Heart left ventricle (tissue), 16 donors: ENCODE measurements at regions of chr18 and their contacts with region 1.

Region 1: DNA sequence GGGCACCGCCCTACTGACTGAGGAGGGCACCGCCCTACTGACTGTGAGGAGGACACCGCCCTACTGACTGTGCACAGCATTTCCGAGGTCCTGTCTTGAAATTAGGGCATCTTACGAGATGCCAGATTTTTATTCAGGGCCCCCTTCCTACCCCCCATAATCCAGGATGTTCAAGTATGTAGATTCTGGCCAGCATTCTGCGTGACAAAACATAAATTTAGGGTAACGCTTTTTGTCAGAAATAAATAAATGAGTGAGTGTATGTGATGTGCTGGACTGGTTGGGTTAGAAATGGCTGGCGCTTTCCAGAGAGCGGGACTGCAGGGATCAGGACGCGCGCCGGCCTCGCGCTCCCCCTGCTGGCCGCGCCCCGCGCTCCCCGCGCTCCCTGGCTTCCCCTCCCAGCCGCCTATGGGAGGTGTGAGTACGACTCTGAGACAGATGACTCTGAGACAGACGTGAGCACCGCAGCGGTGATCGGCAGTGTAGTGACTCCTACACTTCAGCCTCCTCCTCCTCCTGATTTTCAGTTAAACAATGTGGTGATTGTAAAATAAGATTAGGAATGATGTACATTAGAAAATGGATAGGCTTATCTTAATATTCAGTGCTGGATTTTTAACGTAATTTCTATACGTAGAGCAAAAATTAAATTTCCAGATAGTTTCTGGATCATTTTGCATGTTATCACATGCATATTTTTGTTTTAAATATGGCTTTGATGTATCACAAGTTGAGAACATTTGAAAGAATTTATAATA is 149.2 kb upstream of the NFATC1 start:
- DNase-seq: peak; percentile 58 to 83 (median 71)
- ATAC-seq: peak; percentile 81 to 100 (median 97)
- H3K4me3 ChIP-seq: peak overlapping the region in 1 of 12 donors; percentile 11
- H3K27ac ChIP-seq: no peak overlapping the region
- H3K4me1 ChIP-seq: peaks cover 0 to 9% (median 0%) of the 10 kb centered on the region in 12 donors
- H3K27me3 ChIP-seq: no peaks in the 10 kb centered on the region
- CTCF ChIP-seq: peak; percentile 89 to 99 (median 93)
- POLR2A ChIP-seq: no peak

Region 2: GRCh38 chr18:77899972-77900754 is 1346.4 kb before region 1 on chr18:
- intact Hi-C with region 1: loop called in 2 of 10 experiments (anchors 10 kb)
- DNase-seq: peak in 2 of 5 donors; percentile 40 to 72
- ATAC-seq: peak; percentile 26 to 94 (median 69)
- H3K4me3 ChIP-seq: peak overlapping the region in 9 of 12 donors; percentile 11 to 51 (median 33)
- H3K27ac ChIP-seq: no peak overlapping the region
- H3K4me1 ChIP-seq: peaks cover 0 to 8% (median 4%) of the 10 kb centered on the region in 12 donors
- H3K27me3 ChIP-seq: peaks cover 0 to 42% (median 10%) of the 10 kb centered on the region in 9 donors
- CTCF ChIP-seq: peak; percentile 50 to 91 (median 66)
- POLR2A ChIP-seq: no peak

Region 3: DNA sequence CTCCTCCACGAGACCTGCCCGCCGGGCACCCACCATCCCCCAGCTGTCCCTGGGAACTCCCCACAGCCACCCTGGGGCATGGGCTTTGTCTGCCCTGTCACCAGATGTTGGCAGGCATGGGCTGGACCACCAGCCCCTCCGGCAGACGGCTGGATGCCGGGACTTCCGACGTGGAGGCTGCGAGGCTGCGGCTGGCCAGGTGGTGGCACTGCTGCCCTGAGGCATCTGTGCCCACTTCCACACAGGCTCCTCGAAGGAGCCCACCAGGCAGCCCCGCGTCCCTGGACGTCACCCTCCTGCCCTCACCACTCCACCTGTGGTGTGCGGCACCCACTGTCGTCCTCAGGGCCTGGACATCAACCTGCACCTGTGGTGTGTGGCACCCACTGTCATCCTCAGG is 586.8 kb before region 1 on chr18:
- intact Hi-C with region 1: loop called in 1 of 10 experiments (anchors 5 kb)
- DNase-seq: no peak
- ATAC-seq: peak in 1 of 4 donors; percentile 26
- H3K4me3 ChIP-seq: no peak overlapping the region
- H3K27ac ChIP-seq: no peak overlapping the region
- H3K4me1 ChIP-seq: no peaks in the 10 kb centered on the region
- H3K27me3 ChIP-seq: peaks cover 0 to 20% (median 0%) of the 10 kb centered on the region in 9 donors
- CTCF ChIP-seq: peak in 11 of 12 donors; percentile 8 to 51 (median 37)
- POLR2A ChIP-seq: no peak

Region 4: GRCh38 chr18:78984941-78985784 is 261.4 kb before region 1 on chr18:
- intact Hi-C with region 1: loop called in 1 of 10 experiments (anchors 10 kb)
- DNase-seq: no peak
- ATAC-seq: peak in 2 of 4 donors; percentile 30 to 33
- H3K4me3 ChIP-seq: no peak overlapping the region
- H3K27ac ChIP-seq: no peak overlapping the region
- H3K4me1 ChIP-seq: peaks cover 0 to 12% (median 5%) of the 10 kb centered on the region in 12 donors
- H3K27me3 ChIP-seq: peaks cover 58 to 100% (median 86%) of the 10 kb centered on the region in 9 donors
- CTCF ChIP-seq: peak in 1 of 12 donors; percentile 14
- POLR2A ChIP-seq: no peak